CD4-positive, alpha-beta memory T cell (primary cell): ENCODE measurements at regions of chr17 and their contacts with region 1.

Region 1: DNA sequence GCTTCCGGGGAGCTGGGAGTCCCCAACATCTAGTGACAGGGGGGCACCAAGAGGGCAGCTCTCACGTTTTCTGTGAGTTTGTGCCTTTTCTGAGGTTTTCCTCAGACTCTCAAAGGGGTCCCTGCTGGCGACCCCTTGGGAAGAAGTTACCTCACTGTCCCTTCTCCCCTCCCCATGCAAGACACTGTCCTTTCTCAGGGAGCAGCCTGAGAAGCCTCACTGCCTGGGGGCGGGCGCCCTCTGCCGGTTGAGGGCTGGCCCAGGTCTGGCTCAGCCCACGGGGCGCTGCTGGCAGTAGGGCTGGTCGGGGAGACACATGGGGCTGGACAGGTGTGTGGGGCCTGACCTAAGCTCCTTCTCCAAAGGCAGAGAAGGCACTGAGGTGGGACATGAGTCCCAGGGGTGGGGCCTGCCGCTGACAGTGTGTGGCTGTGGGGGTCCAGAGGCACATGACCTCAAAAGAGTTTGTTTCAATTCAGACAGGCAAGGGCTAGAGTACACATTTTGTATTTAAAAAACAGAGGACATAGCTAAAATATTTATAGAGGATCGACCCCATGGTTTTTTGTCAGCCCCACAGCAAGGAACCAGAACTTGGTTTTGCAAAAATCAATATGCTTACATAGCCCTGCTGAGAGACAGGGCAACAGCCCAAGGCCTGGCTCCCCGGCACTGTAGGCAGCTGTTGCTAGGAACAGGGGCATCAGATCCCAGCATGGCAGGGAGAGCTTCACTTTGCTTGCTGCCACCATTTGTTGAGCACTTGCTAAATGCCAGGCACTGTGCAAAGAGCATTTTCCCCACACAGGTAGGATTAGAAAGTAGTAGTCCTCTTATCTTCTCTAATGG is 18.5 kb upstream of the ALDH3A1 start:
- DNase-seq: peak; percentile 55 to 77 (median 69)
- H3K4me3 ChIP-seq: no peak overlapping the region
- H3K4me3 Mint-ChIP-seq: peak overlapping the region in 5 of 8 donors; percentile 31 to 54 (median 49)
- H3K27ac ChIP-seq: no peak overlapping the region
- H3K27ac Mint-ChIP-seq: peak overlapping the region; percentile 24 to 91 (median 72)
- H3K4me1 ChIP-seq: peaks cover 47% of the 10 kb centered on the region
- H3K4me1 Mint-ChIP-seq: peaks cover 25 to 57% (median 38%) of the 10 kb centered on the region in 4 donors
- H3K27me3 ChIP-seq: no peaks in the 10 kb centered on the region
- H3K27me3 Mint-ChIP-seq: peaks cover 2% of the 10 kb centered on the region in 2 donors

Region 2: GRCh38 chr17:19362277-19363113 is 404.2 kb before region 1 on chr17 and contains the start of gene B9D1:
- CTCF ChIA-PET with region 1: interaction called, 26 read pairs
- POLR2A ChIA-PET with region 1: interaction called, 7 read pairs
- intact Hi-C with region 1: loop called (anchors 1 kb)
- DNase-seq: peak; percentile 92 to 96 (median 92)
- H3K4me3 ChIP-seq: peak within 1 kb of the TSS; percentile 70 to 88
- H3K4me3 Mint-ChIP-seq: peak within 1 kb of the TSS; percentile 90 to 96 (median 92)
- H3K27ac ChIP-seq: peak within 1 kb of the TSS; percentile 59
- H3K27ac Mint-ChIP-seq: peak within 1 kb of the TSS; percentile 88 to 95 (median 92)
- H3K4me1 ChIP-seq: peaks cover 6% of the 10 kb centered on the region
- H3K4me1 Mint-ChIP-seq: peaks cover 5 to 19% (median 6%) of the 10 kb centered on the region in 4 donors
- H3K27me3 ChIP-seq: no peaks in the 10 kb centered on the region
- H3K27me3 Mint-ChIP-seq: peaks cover 5 to 10% of the 10 kb centered on the region in 2 donors
- total RNA-seq, gene B9D1: 2.5 to 2.8 TPM

Region 3: GRCh38 chr17:19614900-19615299 is 151.7 kb before region 1 on chr17:
- CTCF ChIA-PET with region 1: interaction called, 10 read pairs
- POLR2A ChIA-PET with region 1: no interaction called
- intact Hi-C with region 1: no loop called
- DNase-seq: no peak
- H3K4me3 ChIP-seq: no peak overlapping the region
- H3K4me3 Mint-ChIP-seq: no peak overlapping the region
- H3K27ac ChIP-seq: no peak overlapping the region
- H3K27ac Mint-ChIP-seq: no peak overlapping the region
- H3K4me1 ChIP-seq: no peaks in the 10 kb centered on the region
- H3K4me1 Mint-ChIP-seq: peaks cover 0 to 5% (median 4%) of the 10 kb centered on the region in 4 donors
- H3K27me3 ChIP-seq: no peaks in the 10 kb centered on the region
- H3K27me3 Mint-ChIP-seq: peaks cover 0 to 8% of the 10 kb centered on the region in 2 donors

Region 4: GRCh38 chr17:19728079-19728495 is 38.6 kb before region 1 on chr17:
- CTCF ChIA-PET with region 1: interaction called, 10 read pairs
- POLR2A ChIA-PET with region 1: no interaction called
- intact Hi-C with region 1: no loop called
- DNase-seq: no peak
- H3K4me3 ChIP-seq: no peak overlapping the region
- H3K4me3 Mint-ChIP-seq: no peak overlapping the region
- H3K27ac ChIP-seq: no peak overlapping the region
- H3K27ac Mint-ChIP-seq: no peak overlapping the region
- H3K4me1 ChIP-seq: peaks cover 21% of the 10 kb centered on the region
- H3K4me1 Mint-ChIP-seq: peaks cover 16 to 36% (median 23%) of the 10 kb centered on the region in 4 donors
- H3K27me3 ChIP-seq: no peaks in the 10 kb centered on the region
- H3K27me3 Mint-ChIP-seq: no peaks in the 10 kb centered on the region

Region 5: GRCh38 chr17:19753049-19753444 is 13.6 kb before region 1 on chr17:
- CTCF ChIA-PET with region 1: interaction called, 14 read pairs
- POLR2A ChIA-PET with region 1: no interaction called
- intact Hi-C with region 1: no loop called
- DNase-seq: no peak
- H3K4me3 ChIP-seq: no peak overlapping the region
- H3K4me3 Mint-ChIP-seq: no peak overlapping the region
- H3K27ac ChIP-seq: no peak overlapping the region
- H3K27ac Mint-ChIP-seq: no peak overlapping the region
- H3K4me1 ChIP-seq: no peaks in the 10 kb centered on the region
- H3K4me1 Mint-ChIP-seq: peaks cover 0 to 4% (median 4%) of the 10 kb centered on the region in 4 donors
- H3K27me3 ChIP-seq: no peaks in the 10 kb centered on the region
- H3K27me3 Mint-ChIP-seq: peaks cover 4 to 20% of the 10 kb centered on the region in 2 donors

Region 6: GRCh38 chr17:19812407-19812806 is 45.8 kb after region 1 on chr17:
- CTCF ChIA-PET with region 1: interaction called, 12 read pairs
- POLR2A ChIA-PET with region 1: no interaction called
- intact Hi-C with region 1: loop called (anchors 5 kb)
- DNase-seq: peak in 4 of 5 donors; percentile 5 to 22 (median 11)
- H3K4me3 ChIP-seq: no peak overlapping the region
- H3K4me3 Mint-ChIP-seq: no peak overlapping the region
- H3K27ac ChIP-seq: no peak overlapping the region
- H3K27ac Mint-ChIP-seq: no peak overlapping the region
- H3K4me1 ChIP-seq: no peaks in the 10 kb centered on the region
- H3K4me1 Mint-ChIP-seq: peaks cover 0 to 1% (median 0%) of the 10 kb centered on the region in 4 donors
- H3K27me3 ChIP-seq: no peaks in the 10 kb centered on the region
- H3K27me3 Mint-ChIP-seq: no peaks in the 10 kb centered on the region

Region 7: DNA sequence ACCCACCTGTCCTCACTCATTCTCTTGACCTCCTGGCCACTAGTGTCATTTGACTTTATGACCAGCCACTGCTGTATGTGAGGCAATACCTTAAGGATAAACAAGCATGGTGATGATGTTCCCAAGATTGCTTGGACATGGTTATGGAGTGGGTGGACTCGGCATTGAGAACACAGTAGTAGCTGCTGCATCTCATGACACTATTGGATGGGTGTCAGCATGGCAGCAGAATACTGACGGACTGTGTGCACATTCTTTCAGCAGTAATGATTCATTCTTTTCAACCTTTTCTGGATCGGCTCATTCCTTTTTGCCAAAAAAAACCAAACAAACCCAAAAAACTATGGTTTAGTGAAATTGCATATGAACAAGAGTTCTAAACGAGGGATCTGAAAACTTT is 256.1 kb after region 1 on chr17:
- CTCF ChIA-PET with region 1: no interaction called
- POLR2A ChIA-PET with region 1: no interaction called
- intact Hi-C with region 1: no loop called
- DNase-seq: no peak
- H3K4me3 ChIP-seq: no peak overlapping the region
- H3K4me3 Mint-ChIP-seq: no peak overlapping the region
- H3K27ac ChIP-seq: no peak overlapping the region
- H3K27ac Mint-ChIP-seq: no peak overlapping the region
- H3K4me1 ChIP-seq: no peaks in the 10 kb centered on the region
- H3K4me1 Mint-ChIP-seq: no peaks in the 10 kb centered on the region
- H3K27me3 ChIP-seq: no peaks in the 10 kb centered on the region
- H3K27me3 Mint-ChIP-seq: peaks cover 0 to 1% of the 10 kb centered on the region in 2 donors